Activated T-helper 1 cell treated with anti-CD3 and anti-CD28 coated beads, Interleukin-12 subunit alpha, Interleukin-12 subunit beta, Interleukin-2, Interleukin-4 antibody, amounts not matched to agents 30 ng/mL and 10 ng/mL and 1 ng/mL, durations not matched to agents 14 hours and 24 hours and 36 hours (primary cell): ENCODE measurements at regions of chr12 and their contacts with region 1.

Region 1: GRCh38 chr12:68807576-68808387 is at the start of gene MDM2:
- DNase-seq: peak; percentile 98
- H3K4me3 Mint-ChIP-seq: peak within 1 kb of the TSS; percentile 97
- H3K27ac Mint-ChIP-seq: peak within 1 kb of the TSS; percentile 99
- H3K4me1 Mint-ChIP-seq: peaks cover 34% of the 10 kb centered on the region
- H3K27me3 Mint-ChIP-seq: peaks cover 2% of the 10 kb centered on the region
- total RNA-seq, gene MDM2: 279 and 303 TPM in 2 replicates

Region 2: DNA sequence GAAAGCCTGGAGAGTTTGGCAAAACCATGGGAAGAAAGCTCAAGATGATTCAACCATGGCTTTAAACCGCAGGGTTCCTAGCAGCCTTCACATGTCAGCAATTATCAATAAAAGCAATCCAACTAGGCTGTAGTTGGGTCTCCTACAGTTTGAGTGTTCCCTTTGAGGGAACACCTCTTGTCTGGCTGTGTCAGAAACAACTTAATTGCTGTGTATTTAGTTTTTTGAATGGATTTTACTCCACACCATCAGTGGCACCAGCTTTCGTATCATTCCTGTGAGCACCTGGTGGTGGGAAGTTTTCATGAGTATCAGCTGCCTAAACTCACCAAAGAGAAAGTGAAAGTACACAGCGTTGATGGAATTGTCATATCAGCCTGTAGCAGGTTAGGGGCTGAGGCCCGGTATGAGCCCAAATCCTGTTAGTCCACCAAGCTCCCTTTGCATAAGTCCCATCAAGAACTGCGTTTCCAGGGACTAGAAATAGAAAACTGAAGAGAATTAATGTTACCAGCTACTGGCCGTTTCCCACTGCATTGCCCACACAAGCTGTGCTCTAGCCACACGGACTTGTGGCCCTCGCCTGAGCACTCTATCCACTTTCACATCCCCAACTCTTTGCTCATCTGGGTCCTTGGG is 571.2 kb before region 1 on chr12:
- intact Hi-C with region 1: loop called (anchors 2 kb)
- DNase-seq: peak; percentile 39
- H3K4me3 Mint-ChIP-seq: peak overlapping the region; percentile 84
- H3K27ac Mint-ChIP-seq: peak overlapping the region; percentile 93
- H3K4me1 Mint-ChIP-seq: peaks cover 94% of the 10 kb centered on the region
- H3K27me3 Mint-ChIP-seq: no peaks in the 10 kb centered on the region

Region 3: DNA sequence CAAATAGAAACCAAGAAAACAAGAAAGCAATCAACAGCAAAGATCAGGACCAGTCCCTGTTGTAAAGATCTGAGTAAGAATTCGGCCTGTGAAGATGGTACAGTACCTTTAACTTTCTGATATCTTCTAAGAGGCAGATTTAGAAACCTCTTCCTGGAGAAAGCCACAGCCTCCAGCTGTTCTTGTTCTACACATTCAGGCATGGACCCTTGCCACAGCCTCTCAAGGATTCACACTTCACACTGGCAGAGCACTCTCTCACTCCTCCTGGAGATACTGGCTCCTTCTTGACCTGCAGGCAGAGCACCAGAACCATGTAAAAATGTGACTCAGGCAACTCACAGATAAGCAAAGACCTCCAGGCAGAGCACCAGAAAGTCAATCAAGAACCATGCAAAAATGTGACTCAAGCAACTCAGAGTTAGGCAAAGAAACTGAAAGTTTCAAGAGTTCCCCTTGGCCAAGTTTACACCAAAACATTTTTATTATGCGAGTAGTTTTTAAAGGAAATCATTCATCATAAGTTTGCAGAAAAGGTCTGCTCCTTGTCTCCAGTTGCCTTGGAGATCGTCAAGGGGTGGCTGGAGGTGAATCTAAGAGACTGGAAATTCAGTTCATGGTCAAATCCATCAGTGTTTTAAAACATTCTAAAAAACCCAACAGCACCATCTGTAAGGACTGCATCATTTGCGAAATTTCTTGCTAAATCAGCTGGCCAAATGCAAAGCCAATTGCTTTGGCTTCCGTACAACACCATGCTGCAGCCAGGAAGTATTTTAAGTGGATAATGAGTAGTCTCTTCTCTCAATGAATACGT is 356.3 kb before region 1 on chr12:
- intact Hi-C with region 1: loop called (anchors 1 kb)
- DNase-seq: peak; percentile 53
- H3K4me3 Mint-ChIP-seq: peak overlapping the region; percentile 73
- H3K27ac Mint-ChIP-seq: peak overlapping the region; percentile 97
- H3K4me1 Mint-ChIP-seq: peaks cover 99% of the 10 kb centered on the region
- H3K27me3 Mint-ChIP-seq: no peaks in the 10 kb centered on the region

Region 4: DNA sequence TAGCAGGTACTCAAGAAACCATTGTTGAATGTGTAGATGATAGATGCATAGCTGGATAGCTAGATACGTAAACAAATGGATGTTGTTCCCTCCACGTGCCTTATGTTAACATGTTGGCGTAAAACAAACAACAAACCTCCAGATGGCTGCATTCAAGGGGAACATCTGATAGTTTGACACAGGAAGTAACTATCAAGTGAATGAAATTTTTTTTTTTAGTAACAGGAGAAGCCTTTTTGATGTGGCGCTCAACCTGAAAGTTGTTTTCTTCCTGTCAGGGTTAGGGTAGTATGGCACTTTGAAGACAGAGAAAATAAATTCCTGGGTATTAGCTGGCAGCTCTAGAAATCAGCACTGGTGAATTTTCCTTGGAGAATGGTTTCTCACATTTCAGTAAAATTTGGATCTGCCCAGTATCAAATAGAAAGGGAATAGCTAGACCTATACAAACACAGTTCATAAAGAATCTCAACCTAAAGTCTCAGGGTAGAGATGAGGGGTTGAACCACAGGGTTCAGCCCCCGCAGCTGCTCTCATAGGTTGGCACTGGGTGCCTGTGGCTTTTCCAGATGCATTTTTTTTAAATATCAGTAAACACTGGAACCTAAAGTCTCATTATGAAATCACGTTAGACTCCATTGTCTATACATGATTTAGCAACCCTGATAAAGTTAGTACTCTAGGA is 215.9 kb before region 1 on chr12:
- intact Hi-C with region 1: no loop called
- DNase-seq: peak; percentile 32
- H3K4me3 Mint-ChIP-seq: peak overlapping the region; percentile 64
- H3K27ac Mint-ChIP-seq: peak overlapping the region; percentile 52
- H3K4me1 Mint-ChIP-seq: peaks cover 32% of the 10 kb centered on the region
- H3K27me3 Mint-ChIP-seq: no peaks in the 10 kb centered on the region

Region 5: GRCh38 chr12:68610370-68611093 is 197.2 kb before region 1 on chr12 and contains the start of gene RAP1B:
- intact Hi-C with region 1: loop called (anchors 2 kb)
- DNase-seq: peak; percentile 89
- H3K4me3 Mint-ChIP-seq: peak within 1 kb of the TSS; percentile 96
- H3K27ac Mint-ChIP-seq: peak within 1 kb of the TSS; percentile 96
- H3K4me1 Mint-ChIP-seq: peaks cover 52% of the 10 kb centered on the region
- H3K27me3 Mint-ChIP-seq: no peaks in the 10 kb centered on the region
- total RNA-seq, gene RAP1B: 244 and 263 TPM in 2 replicates

Region 6: GRCh38 chr12:68745904-68746571 is 61.7 kb before region 1 on chr12 and contains the start of gene SLC35E3:
- intact Hi-C with region 1: loop called (anchors 1 kb)
- DNase-seq: peak; percentile 91
- H3K4me3 Mint-ChIP-seq: peak within 1 kb of the TSS; percentile 94
- H3K27ac Mint-ChIP-seq: peak within 1 kb of the TSS; percentile 87
- H3K4me1 Mint-ChIP-seq: peaks cover 50% of the 10 kb centered on the region
- H3K27me3 Mint-ChIP-seq: no peaks in the 10 kb centered on the region
- total RNA-seq, gene SLC35E3: 5.9 and 6.3 TPM in 2 replicates

Region 7: GRCh38 chr12:68844788-68845695 is 37.3 kb after region 1 on chr12:
- intact Hi-C with region 1: no loop called
- DNase-seq: no peak
- H3K4me3 Mint-ChIP-seq: no peak overlapping the region
- H3K27ac Mint-ChIP-seq: no peak overlapping the region
- H3K4me1 Mint-ChIP-seq: no peaks in the 10 kb centered on the region
- H3K27me3 Mint-ChIP-seq: no peaks in the 10 kb centered on the region

Region 8: GRCh38 chr12:69239352-69239921 is 431.7 kb after region 1 on chr12 and contains the start of gene CPSF6:
- intact Hi-C with region 1: loop called (anchors 1 kb)
- DNase-seq: peak; percentile 94
- H3K4me3 Mint-ChIP-seq: peak within 1 kb of the TSS; percentile 100
- H3K27ac Mint-ChIP-seq: peak within 1 kb of the TSS; percentile 99
- H3K4me1 Mint-ChIP-seq: peaks cover 47% of the 10 kb centered on the region
- H3K27me3 Mint-ChIP-seq: peaks cover 7% of the 10 kb centered on the region
- total RNA-seq, gene CPSF6: 114 and 115 TPM in 2 replicates